HCT116 (cell line): ENCODE measurements at regions of chr13 and their contacts with region 1.

Region 1: GRCh38 chr13:45623515-45624090 is 8.1 kb upstream of the ERICH6B start:
- DNase-seq: peak; percentile 33
- ATAC-seq: peak; percentile 76; the same call in 1 of the 2 replicates
- H3K4me3 ChIP-seq: no peak overlapping the region
- H3K27ac ChIP-seq: no peak overlapping the region
- H3K4me1 ChIP-seq: no peaks in the 10 kb centered on the region
- H3K27me3 ChIP-seq: peaks cover 90% of the 10 kb centered on the region
- CTCF ChIP-seq: peak; percentile 36 to 62 (median 44); a peak in 4 of 6 replicates
- POLR2A ChIP-seq: no peak
- RAD21 ChIP-seq: peak; percentile 58

Region 2: GRCh38 chr13:45584816-45585215 is 38.8 kb before region 1 on chr13:
- CTCF ChIA-PET with region 1: no interaction called
- POLR2A ChIA-PET with region 1: no interaction called
- RAD21 ChIA-PET with region 1: no interaction called
- intact Hi-C with region 1: no loop called
- DNase-seq: peak; percentile 16
- ATAC-seq: peak; percentile 86
- H3K4me3 ChIP-seq: no peak overlapping the region
- H3K27ac ChIP-seq: no peak overlapping the region
- H3K4me1 ChIP-seq: no peaks in the 10 kb centered on the region
- H3K27me3 ChIP-seq: no peaks in the 10 kb centered on the region
- CTCF ChIP-seq: peak in 2 of 3 experiments; percentile 39 to 40; a peak in 3 of 6 replicates
- POLR2A ChIP-seq: no peak
- RAD21 ChIP-seq: peak; percentile 23; the same call in 1 of the 2 replicates

Region 3: DNA sequence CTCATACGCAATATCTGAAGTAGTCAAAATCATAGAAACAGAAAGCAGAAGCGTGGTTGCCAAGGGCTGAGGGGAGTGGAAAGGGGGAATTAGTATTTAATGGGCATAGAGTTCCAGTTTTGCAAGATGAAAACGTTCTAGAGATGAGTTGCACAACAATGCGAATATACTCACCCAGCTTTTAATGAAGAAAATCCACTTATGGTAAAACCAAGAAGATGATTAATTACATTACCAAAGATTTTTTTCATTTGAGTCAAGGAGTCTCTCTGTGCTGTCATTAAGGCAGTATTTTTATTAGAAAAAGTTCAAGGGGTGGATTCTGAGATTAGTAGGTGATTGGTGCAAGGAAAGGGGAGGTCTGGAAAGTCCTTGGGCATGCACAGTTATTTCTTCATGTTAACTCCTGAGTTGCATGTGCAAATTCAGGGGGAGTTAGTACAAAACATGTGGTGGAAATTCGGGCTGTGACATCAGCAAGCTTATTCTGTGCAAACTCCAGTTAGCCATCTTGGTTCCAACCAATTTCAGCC is 71.7 kb after region 1 on chr13:
- CTCF ChIA-PET with region 1: no interaction called
- POLR2A ChIA-PET with region 1: no interaction called
- RAD21 ChIA-PET with region 1: no interaction called
- intact Hi-C with region 1: no loop called
- DNase-seq: no peak
- ATAC-seq: no peak
- H3K4me3 ChIP-seq: no peak overlapping the region
- H3K27ac ChIP-seq: no peak overlapping the region
- H3K4me1 ChIP-seq: no peaks in the 10 kb centered on the region
- H3K27me3 ChIP-seq: peaks cover 55% of the 10 kb centered on the region
- CTCF ChIP-seq: no peak
- POLR2A ChIP-seq: no peak
- RAD21 ChIP-seq: no peak

Region 4: DNA sequence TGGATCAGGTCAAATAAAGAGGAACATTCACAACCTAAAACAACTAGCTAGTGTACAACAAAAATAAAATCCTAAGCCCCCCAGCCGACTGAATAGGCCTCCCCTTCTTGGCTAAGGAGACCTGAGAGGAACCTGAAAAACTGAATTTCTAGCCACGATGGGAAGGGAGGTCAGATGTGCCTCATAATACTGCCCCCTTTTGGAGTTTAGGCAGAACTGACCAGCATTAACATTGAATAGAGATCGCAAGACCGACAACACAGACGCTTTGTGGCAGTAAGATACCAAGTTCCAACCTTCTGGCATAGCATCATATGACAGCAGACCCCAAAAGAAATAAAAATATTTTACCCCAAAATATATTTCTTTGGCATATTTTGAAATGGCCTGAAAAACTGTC is 94.5 kb after region 1 on chr13:
- CTCF ChIA-PET with region 1: interaction called, 3 read pairs
- POLR2A ChIA-PET with region 1: no interaction called
- RAD21 ChIA-PET with region 1: no interaction called
- intact Hi-C with region 1: loop called (anchors 5 kb)
- DNase-seq: peak; percentile 8
- ATAC-seq: peak; percentile 78
- H3K4me3 ChIP-seq: no peak overlapping the region
- H3K27ac ChIP-seq: no peak overlapping the region
- H3K4me1 ChIP-seq: no peaks in the 10 kb centered on the region
- H3K27me3 ChIP-seq: peaks cover 25% of the 10 kb centered on the region
- CTCF ChIP-seq: peak; percentile 46 to 76 (median 65); a peak in 5 of 6 replicates
- POLR2A ChIP-seq: no peak
- RAD21 ChIP-seq: peak; percentile 58

Region 5: GRCh38 chr13:46126552-46127357 is 503.2 kb after region 1 on chr13:
- CTCF ChIA-PET with region 1: interaction called, 6 read pairs
- POLR2A ChIA-PET with region 1: no interaction called
- RAD21 ChIA-PET with region 1: no interaction called
- intact Hi-C with region 1: loop called (anchors 5 kb)
- DNase-seq: peak; percentile 57
- ATAC-seq: peak; percentile 100
- H3K4me3 ChIP-seq: no peak overlapping the region
- H3K27ac ChIP-seq: no peak overlapping the region
- H3K4me1 ChIP-seq: no peaks in the 10 kb centered on the region
- H3K27me3 ChIP-seq: peaks cover 30% of the 10 kb centered on the region
- CTCF ChIP-seq: peak; percentile 86 to 97 (median 93)
- POLR2A ChIP-seq: no peak
- RAD21 ChIP-seq: peak; percentile 89

Region 6: DNA sequence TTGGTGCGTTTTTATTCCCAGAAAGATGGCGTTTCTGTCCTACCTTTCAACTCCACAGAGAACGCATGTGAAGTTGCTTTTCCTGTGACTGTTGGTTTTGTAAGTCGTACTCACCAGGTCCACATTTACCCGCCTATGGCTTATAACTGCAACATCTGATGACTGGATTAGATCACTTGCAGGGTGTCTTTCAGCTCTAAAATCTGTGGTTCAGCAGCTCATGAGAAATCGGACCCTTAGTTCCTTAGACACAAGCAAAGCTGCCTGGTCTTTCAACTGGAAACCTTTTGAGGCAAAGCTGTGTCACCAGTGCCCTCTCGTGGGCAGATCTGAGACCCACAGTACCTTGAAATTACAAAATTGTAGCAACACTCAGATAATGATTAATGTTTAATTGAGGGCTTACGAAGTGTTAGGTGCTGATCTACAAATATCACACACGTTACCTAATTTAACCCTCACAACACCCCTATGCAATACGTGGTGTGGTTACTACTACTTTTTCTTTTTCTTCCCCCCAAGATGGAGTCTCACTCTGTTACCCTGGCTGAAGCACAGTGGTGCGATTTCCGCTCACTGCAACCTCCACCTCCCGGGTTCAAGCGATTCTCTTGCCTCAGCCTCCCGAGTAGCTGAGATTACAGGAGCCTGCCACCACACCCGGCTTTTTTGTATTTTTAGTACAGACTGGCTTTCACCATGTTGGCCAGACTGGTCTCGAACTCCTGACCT is 698.1 kb after region 1 on chr13:
- CTCF ChIA-PET with region 1: interaction called, 3 read pairs
- POLR2A ChIA-PET with region 1: no interaction called
- RAD21 ChIA-PET with region 1: no interaction called
- intact Hi-C with region 1: loop called (anchors 10 kb)
- DNase-seq: peak; percentile 39
- ATAC-seq: peak; percentile 85
- H3K4me3 ChIP-seq: no peak overlapping the region
- H3K27ac ChIP-seq: no peak overlapping the region
- H3K4me1 ChIP-seq: no peaks in the 10 kb centered on the region
- H3K27me3 ChIP-seq: no peaks in the 10 kb centered on the region
- CTCF ChIP-seq: peak; percentile 68 to 85 (median 81); a peak in 5 of 6 replicates
- POLR2A ChIP-seq: no peak
- RAD21 ChIP-seq: peak; percentile 79